PC-9 (cell line): ENCODE measurements at regions of chr2 and their contacts with region 1.

Region 1: GRCh38 chr2:64311948-64312621 is 141.9 kb upstream of the LGALSL start:
- DNase-seq: peak; percentile 70 to 73
- H3K4me3 ChIP-seq: no peak overlapping the region
- H3K27ac ChIP-seq: no peak overlapping the region
- H3K4me1 ChIP-seq: no peaks in the 10 kb centered on the region
- H3K27me3 ChIP-seq: no peaks in the 10 kb centered on the region
- CTCF ChIP-seq: no peak

Region 2: GRCh38 chr2:64035072-64035942 is 276.8 kb before region 1 on chr2:
- CTCF ChIA-PET with region 1: no interaction called
- POLR2A ChIA-PET with region 1: no interaction called
- intact Hi-C with region 1: no loop called
- DNase-seq: no peak
- H3K4me3 ChIP-seq: no peak overlapping the region
- H3K27ac ChIP-seq: no peak overlapping the region
- H3K4me1 ChIP-seq: no peaks in the 10 kb centered on the region; the same call in 1 of the 2 replicates
- H3K27me3 ChIP-seq: no peaks in the 10 kb centered on the region
- CTCF ChIP-seq: no peak

Region 3: DNA sequence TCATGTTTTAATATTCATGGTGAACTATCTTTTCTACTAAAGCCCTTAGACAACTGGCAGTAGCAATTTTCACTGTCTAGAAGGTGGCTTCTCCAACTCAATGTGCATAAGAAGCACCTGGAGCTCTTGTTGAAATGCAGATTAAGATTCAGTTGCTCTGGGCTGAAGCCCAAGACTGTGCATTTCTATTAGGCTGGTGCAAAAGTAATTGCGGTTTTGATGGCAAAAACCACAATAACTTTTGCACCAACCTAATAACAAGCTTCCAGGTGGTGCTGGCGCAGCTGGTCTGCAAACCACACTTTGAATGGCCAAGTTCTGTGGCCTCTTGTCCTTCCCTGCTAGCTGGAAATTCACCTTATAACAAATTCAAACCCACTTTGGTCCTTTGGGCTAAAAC is 266.1 kb before region 1 on chr2:
- CTCF ChIA-PET with region 1: interaction called, 4 read pairs
- POLR2A ChIA-PET with region 1: no interaction called
- intact Hi-C with region 1: loop called (anchors 5 kb)
- DNase-seq: no peak
- H3K4me3 ChIP-seq: no peak overlapping the region
- H3K27ac ChIP-seq: no peak overlapping the region
- H3K4me1 ChIP-seq: peaks cover 4% of the 10 kb centered on the region; the same call in 1 of the 2 replicates
- H3K27me3 ChIP-seq: no peaks in the 10 kb centered on the region
- CTCF ChIP-seq: no peak